ENCODE measurements at regions of chr12 and their contacts with region 1.

Region 1: GRCh38 chr12:106774005-106774807 is at the start of gene RIC8B:
- DNase-seq: peak; percentile 77
- H3K4me3 Mint-ChIP-seq: peak within 1 kb of the TSS; percentile 100
- H3K27ac Mint-ChIP-seq: peak within 1 kb of the TSS; percentile 98
- H3K4me1 Mint-ChIP-seq: peaks cover 37% of the 10 kb centered on the region
- H3K27me3 Mint-ChIP-seq: no peaks in the 10 kb centered on the region
- total RNA-seq, gene RIC8B: 11.4 and 12.3 TPM in 2 replicates

Region 2: DNA sequence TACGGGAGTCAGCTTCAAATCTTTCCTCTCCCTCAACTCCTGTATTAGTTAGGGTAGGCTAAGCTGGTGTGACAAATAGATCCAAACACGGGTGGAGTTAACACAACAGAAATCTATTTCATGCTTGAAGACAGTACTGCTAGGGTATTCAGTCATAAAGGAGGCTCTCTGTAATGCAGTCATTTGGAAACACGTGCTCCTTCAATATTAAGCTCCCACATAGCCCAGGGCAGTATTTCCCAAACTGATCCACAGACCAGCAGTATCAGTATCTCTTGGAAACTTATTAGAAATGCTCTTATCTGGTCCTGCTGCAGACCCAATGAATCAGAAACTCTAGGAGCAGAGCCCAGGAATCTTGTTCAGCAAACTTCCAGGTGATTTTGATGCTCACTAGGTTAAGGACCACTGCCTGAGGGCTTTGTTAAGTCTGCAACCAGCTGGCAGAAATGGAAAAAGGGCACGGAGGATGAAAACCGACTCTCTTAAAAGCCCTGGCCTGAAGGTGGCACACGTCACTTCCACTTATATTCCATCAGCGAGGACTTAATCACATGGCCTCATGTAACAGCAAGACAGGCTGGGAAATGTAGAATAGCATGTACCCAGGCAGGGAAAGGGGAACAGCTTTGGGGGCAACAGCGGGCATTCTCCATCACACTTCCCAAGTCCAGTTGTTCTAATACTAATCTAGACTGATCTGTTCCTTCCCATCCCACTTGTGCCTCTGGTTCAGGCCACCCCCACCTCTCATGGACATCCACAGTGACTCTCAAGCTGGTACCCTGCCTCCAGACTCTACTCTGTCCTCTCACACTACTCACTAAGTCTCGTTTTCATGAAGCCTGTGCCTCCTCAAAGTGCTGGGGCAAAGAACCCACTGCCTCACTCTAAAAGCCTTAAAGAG is 37.9 kb before region 1 on chr12:
- intact Hi-C with region 1: no loop called
- DNase-seq: no peak
- H3K4me3 Mint-ChIP-seq: no peak overlapping the region
- H3K27ac Mint-ChIP-seq: no peak overlapping the region
- H3K4me1 Mint-ChIP-seq: no peaks in the 10 kb centered on the region
- H3K27me3 Mint-ChIP-seq: peaks cover 17% of the 10 kb centered on the region

Region 3: GRCh38 chr12:106747973-106748436 is 26.2 kb before region 1 on chr12:
- intact Hi-C with region 1: loop called (anchors 1 kb)
- DNase-seq: peak; percentile 11
- H3K4me3 Mint-ChIP-seq: peak overlapping the region; percentile 41
- H3K27ac Mint-ChIP-seq: peak overlapping the region; percentile 91
- H3K4me1 Mint-ChIP-seq: peaks cover 17% of the 10 kb centered on the region
- H3K27me3 Mint-ChIP-seq: peaks cover 11% of the 10 kb centered on the region

Region 4: GRCh38 chr12:106914796-106915634 is 140.8 kb after region 1 on chr12:
- intact Hi-C with region 1: loop called (anchors 2 kb)
- DNase-seq: peak; percentile 16
- H3K4me3 Mint-ChIP-seq: peak overlapping the region; percentile 8
- H3K27ac Mint-ChIP-seq: peak overlapping the region; percentile 83
- H3K4me1 Mint-ChIP-seq: peaks cover 34% of the 10 kb centered on the region
- H3K27me3 Mint-ChIP-seq: peaks cover 2% of the 10 kb centered on the region

Region 5: DNA sequence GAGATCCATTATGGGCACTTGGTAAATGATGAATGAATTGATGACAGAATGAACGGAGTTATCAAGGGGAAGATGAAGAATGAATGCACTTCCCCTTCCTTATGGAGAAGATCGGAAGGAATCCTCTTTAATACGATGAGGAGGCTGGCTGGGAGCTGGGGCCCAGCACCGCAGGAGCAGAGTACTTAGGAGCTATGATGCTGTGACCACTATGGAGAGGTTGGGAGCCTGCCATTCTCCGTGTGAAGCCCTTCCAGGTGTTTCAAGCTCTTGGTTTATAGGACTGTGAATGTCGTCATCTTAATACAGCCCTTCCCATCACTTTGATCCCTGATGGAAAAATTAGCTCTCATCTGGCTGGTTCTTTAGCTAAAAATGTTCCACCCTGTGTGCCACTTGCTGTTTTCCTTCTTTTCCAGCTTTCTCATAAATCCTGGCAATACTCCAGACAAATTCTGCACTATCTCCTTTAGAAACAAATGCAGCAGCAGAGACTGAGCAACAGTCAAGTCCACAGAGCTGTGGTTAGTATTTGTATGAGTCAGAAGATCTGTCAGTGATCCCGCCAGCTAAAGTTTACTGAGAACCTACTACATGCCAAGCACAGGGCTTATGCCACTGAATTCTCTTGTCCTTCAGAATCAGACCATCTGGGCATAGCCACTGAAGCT is 582.2 kb after region 1 on chr12:
- intact Hi-C with region 1: loop called (anchors 10 kb)
- DNase-seq: no peak
- H3K4me3 Mint-ChIP-seq: peak overlapping the region; percentile 19
- H3K27ac Mint-ChIP-seq: no peak overlapping the region
- H3K4me1 Mint-ChIP-seq: peaks cover 74% of the 10 kb centered on the region
- H3K27me3 Mint-ChIP-seq: peaks cover 2% of the 10 kb centered on the region